ENCODE measurements at regions of chr18 and their contacts with region 1.

Region 1: GRCh38 chr18:48345596-48345995 is 63.6 kb downstream of the ZBTB7C start:
- DNase-seq: peak in 1 of 2 donors; percentile 51
- H3K4me3 ChIP-seq: no peak overlapping the region
- H3K27ac ChIP-seq: no peak overlapping the region
- H3K4me1 ChIP-seq: peaks cover 0 to 36% (median 3%) of the 10 kb centered on the region in 4 donors
- H3K27me3 ChIP-seq: no peaks in the 10 kb centered on the region
- CTCF ChIP-seq: peak in 4 of 7 experiments; percentile 25 to 62 (median 30)
- EP300 ChIP-seq: no peak
- POLR2A ChIP-seq: no peak

Region 2: GRCh38 chr18:47772374-47773248 is 573.0 kb before region 1 on chr18:
- intact Hi-C with region 1: no loop called
- DNase-seq: peak; percentile 62 to 78
- H3K4me3 ChIP-seq: no peak overlapping the region
- H3K27ac ChIP-seq: no peak overlapping the region
- H3K4me1 ChIP-seq: no peaks in the 10 kb centered on the region
- H3K27me3 ChIP-seq: no peaks in the 10 kb centered on the region
- CTCF ChIP-seq: peak in 5 of 7 experiments; percentile 63 to 86 (median 74)
- EP300 ChIP-seq: no peak
- POLR2A ChIP-seq: no peak

Region 3: DNA sequence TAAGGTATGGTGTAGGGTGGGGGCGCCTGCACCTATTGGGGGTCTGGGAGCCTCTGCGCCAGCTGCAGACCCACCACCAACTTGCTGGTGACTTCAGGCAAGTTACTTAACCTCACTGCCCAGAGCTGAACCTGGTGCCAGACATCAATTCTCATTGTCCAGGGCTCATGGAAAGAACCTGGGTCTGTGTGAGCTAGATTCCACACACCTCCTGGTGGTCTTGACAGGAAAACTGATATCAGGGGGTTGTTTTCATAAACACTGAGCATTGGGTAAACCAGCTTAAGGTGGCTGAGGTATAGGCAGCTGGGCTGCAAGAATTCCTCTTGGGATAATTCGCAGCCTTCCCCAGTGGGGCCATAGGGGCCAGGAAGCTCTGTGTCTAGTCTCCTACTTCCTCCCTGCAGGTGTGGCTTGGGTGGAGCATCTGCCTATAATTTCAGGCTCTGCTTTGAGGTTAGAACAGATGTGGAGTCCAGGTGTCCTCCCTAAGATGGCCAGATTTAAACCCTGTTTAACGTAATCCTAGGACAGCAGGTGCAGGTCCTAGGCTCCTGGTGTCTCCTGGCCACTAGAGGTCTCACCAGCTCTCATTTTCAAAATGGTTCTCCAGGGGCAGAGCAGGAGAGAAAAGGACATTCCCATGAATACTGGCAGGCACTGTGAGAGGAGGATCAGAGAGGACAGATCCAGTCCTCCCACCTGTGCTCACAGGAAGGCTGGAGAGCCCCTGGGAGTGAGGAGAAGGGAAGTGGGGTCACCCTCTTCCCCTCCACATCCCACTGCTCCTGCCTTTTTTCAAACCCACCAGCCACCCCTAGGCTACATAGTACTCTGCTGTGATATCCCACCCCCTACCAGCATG is 314.7 kb before region 1 on chr18:
- intact Hi-C with region 1: loop called (anchors 5 kb)
- DNase-seq: peak; percentile 67 to 88
- H3K4me3 ChIP-seq: no peak overlapping the region
- H3K27ac ChIP-seq: no peak overlapping the region
- H3K4me1 ChIP-seq: peaks cover 0 to 19% (median 16%) of the 10 kb centered on the region in 4 donors
- H3K27me3 ChIP-seq: no peaks in the 10 kb centered on the region
- CTCF ChIP-seq: peak in 5 of 7 experiments; percentile 63 to 77 (median 71)
- EP300 ChIP-seq: no peak
- POLR2A ChIP-seq: no peak

Region 4: DNA sequence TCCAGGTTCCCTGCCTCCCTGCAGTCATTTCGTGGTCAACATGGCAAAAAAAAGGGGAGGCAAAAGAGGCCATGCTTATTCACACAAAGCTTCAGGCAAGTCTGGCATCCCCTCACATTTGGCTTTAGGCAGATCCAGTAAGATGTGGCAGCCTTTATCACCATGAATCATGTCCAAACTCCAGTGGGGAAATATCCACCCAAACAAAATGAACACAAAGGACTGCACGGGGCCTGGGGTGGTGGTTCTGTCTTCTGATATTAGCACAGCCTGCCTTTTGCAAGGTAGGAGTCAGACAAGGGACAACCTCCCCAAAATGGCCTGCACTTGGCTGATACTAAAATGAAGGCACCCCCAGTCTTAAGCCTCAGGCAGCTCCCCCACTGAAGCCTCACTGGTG is 66.3 kb before region 1 on chr18:
- intact Hi-C with region 1: no loop called
- DNase-seq: no peak
- H3K4me3 ChIP-seq: no peak overlapping the region
- H3K27ac ChIP-seq: no peak overlapping the region
- H3K4me1 ChIP-seq: peaks cover 0 to 5% (median 0%) of the 10 kb centered on the region in 4 donors
- H3K27me3 ChIP-seq: no peaks in the 10 kb centered on the region
- CTCF ChIP-seq: no peak
- EP300 ChIP-seq: no peak
- POLR2A ChIP-seq: no peak

Region 5: DNA sequence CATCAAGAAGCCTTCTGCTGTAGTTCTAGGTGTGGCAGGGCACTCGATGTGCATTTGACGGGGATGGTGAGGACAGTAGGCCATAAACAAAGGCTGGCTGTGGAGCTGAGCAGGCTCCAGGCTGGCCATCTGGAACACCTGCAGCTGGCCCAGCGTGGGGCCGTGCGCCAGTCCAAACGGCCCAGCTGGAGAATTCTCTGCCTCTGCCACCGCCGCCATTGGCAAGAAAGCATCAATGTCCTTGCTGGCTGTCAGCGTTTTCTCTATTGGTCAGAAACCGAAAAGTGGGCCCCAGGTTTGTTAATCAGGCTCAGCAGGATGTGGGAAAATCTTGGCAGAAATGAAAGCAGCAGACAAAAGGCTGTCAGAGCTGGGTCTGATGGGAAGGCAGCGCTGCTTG is 169.2 kb after region 1 on chr18:
- intact Hi-C with region 1: no loop called
- DNase-seq: no peak
- H3K4me3 ChIP-seq: no peak overlapping the region
- H3K27ac ChIP-seq: no peak overlapping the region
- H3K4me1 ChIP-seq: no peaks in the 10 kb centered on the region
- H3K27me3 ChIP-seq: no peaks in the 10 kb centered on the region
- CTCF ChIP-seq: no peak
- EP300 ChIP-seq: no peak
- POLR2A ChIP-seq: no peak

Region 6: GRCh38 chr18:48622911-48623431 is 277.4 kb after region 1 on chr18:
- intact Hi-C with region 1: no loop called
- DNase-seq: no peak
- H3K4me3 ChIP-seq: no peak overlapping the region
- H3K27ac ChIP-seq: peak overlapping the region in 3 of 5 donors; percentile 19 to 49 (median 47)
- H3K4me1 ChIP-seq: peaks cover 0 to 13% (median 4%) of the 10 kb centered on the region in 4 donors
- H3K27me3 ChIP-seq: no peaks in the 10 kb centered on the region
- CTCF ChIP-seq: no peak
- EP300 ChIP-seq: no peak
- POLR2A ChIP-seq: no peak